ENCODE measurements at regions of chr2 and their contacts with region 1.

Region 1: GRCh38 chr2:217785544-217786045 is 217.2 kb downstream of the TNS1 start:
- DNase-seq: peak; percentile 81
- ATAC-seq: peak; percentile 65
- H3K4me3 Mint-ChIP-seq: no peak overlapping the region
- H3K27ac Mint-ChIP-seq: no peak overlapping the region
- H3K4me1 Mint-ChIP-seq: peaks cover 14% of the 10 kb centered on the region
- H3K27me3 Mint-ChIP-seq: no peaks in the 10 kb centered on the region

Region 2: GRCh38 chr2:217610401-217611075 is 175.1 kb before region 1 on chr2:
- CTCF ChIA-PET with region 1: no interaction called
- DNase-seq: peak; percentile 51
- ATAC-seq: peak; percentile 68
- H3K4me3 Mint-ChIP-seq: no peak overlapping the region
- H3K27ac Mint-ChIP-seq: peak overlapping the region; percentile 29
- H3K4me1 Mint-ChIP-seq: peaks cover 25% of the 10 kb centered on the region
- H3K27me3 Mint-ChIP-seq: no peaks in the 10 kb centered on the region

Region 3: DNA sequence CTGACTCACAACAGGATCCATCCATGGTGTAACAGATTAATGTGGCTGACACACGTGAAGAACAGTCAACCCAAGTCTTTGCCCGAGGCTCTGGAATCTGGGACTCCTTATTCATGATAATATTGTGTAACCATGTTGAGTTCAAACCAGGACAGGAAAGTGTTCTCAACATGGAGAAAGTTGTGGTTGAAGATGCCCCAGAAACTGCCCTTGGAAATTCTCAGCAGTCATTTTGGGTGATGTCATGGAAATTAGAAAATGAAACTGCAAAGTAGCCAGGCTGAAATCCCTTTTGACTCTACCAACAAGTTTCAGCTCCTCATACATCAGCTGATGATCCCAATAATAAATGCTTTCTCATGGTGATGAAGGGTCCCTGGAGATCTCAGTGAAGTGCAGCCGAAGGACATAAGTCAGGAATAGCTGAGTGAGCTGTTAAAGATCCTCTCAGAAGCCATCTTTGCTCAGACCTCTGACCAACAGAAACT is 90.5 kb before region 1 on chr2:
- CTCF ChIA-PET with region 1: no interaction called
- DNase-seq: no peak
- ATAC-seq: no peak
- H3K4me3 Mint-ChIP-seq: no peak overlapping the region
- H3K27ac Mint-ChIP-seq: no peak overlapping the region
- H3K4me1 Mint-ChIP-seq: no peaks in the 10 kb centered on the region
- H3K27me3 Mint-ChIP-seq: no peaks in the 10 kb centered on the region

Region 4: DNA sequence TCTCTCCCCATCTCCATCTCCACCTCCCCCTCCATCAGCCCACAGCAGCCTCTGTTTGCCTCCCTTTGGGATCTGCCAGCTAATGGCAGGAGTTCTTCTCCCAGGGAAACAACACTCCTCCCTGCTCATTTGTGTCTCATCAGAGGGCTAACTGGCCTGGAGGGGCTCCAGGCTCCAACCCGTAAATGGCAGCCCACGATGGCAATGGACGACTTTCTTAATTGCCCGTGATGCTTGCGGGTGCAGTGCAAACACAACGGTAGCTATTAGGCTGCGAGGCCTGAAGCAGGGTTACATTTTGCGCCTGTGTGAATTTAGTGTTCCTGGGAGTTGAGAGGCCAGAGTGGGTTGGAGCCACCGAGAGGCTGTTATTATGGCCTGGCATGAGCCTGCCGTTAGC is 67.9 kb before region 1 on chr2:
- CTCF ChIA-PET with region 1: no interaction called
- DNase-seq: no peak
- ATAC-seq: no peak
- H3K4me3 Mint-ChIP-seq: no peak overlapping the region
- H3K27ac Mint-ChIP-seq: no peak overlapping the region
- H3K4me1 Mint-ChIP-seq: no peaks in the 10 kb centered on the region
- H3K27me3 Mint-ChIP-seq: no peaks in the 10 kb centered on the region

Region 5: DNA sequence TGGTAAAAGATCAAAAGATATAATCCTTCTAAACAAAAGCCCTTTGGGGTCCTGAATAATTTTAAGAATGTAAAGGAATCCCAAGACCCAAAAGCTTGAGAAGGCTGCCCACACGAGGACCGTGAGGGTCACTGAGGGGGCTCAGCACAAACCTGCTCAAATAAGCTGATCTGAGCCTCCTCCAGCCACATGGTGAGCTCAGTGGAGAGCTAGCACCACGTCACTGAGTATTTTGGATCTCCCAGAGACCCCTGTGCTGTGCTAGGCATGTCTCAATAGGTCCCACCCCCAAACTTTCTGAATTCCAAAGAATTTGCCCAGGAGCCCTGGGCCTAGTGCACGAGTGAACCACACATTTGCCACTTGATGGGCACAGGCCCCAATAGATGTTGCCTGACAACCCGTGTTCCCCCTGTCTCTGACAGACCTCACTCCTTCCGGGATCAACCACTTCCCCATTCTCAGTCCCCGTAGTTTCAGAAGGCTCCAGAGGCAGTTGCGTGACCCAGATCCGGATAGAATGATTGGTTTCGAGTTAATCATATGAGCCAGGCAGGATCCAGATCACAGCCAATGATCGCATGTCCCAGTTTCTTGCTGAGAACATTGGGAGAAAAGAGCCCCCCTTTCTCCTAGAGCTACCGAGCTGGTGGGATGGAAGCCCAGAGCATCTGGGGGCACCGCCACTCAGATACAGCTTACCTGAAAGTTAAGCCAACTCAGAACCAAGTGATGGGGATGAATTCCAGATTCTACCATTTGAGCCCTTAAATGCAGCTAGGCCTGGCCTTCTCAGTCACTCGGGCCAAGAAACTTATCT is 13.4 kb after region 1 on chr2:
- CTCF ChIA-PET with region 1: interaction called, 30 read pairs
- DNase-seq: peak; percentile 39
- ATAC-seq: no peak
- H3K4me3 Mint-ChIP-seq: no peak overlapping the region
- H3K27ac Mint-ChIP-seq: no peak overlapping the region
- H3K4me1 Mint-ChIP-seq: peaks cover 5% of the 10 kb centered on the region
- H3K27me3 Mint-ChIP-seq: no peaks in the 10 kb centered on the region

Region 6: GRCh38 chr2:217886720-217887309 is 101.2 kb after region 1 on chr2:
- CTCF ChIA-PET with region 1: interaction called, 85 read pairs
- DNase-seq: peak; percentile 76
- ATAC-seq: peak; percentile 79
- H3K4me3 Mint-ChIP-seq: no peak overlapping the region
- H3K27ac Mint-ChIP-seq: no peak overlapping the region
- H3K4me1 Mint-ChIP-seq: peaks cover 2% of the 10 kb centered on the region
- H3K27me3 Mint-ChIP-seq: no peaks in the 10 kb centered on the region

Region 7: DNA sequence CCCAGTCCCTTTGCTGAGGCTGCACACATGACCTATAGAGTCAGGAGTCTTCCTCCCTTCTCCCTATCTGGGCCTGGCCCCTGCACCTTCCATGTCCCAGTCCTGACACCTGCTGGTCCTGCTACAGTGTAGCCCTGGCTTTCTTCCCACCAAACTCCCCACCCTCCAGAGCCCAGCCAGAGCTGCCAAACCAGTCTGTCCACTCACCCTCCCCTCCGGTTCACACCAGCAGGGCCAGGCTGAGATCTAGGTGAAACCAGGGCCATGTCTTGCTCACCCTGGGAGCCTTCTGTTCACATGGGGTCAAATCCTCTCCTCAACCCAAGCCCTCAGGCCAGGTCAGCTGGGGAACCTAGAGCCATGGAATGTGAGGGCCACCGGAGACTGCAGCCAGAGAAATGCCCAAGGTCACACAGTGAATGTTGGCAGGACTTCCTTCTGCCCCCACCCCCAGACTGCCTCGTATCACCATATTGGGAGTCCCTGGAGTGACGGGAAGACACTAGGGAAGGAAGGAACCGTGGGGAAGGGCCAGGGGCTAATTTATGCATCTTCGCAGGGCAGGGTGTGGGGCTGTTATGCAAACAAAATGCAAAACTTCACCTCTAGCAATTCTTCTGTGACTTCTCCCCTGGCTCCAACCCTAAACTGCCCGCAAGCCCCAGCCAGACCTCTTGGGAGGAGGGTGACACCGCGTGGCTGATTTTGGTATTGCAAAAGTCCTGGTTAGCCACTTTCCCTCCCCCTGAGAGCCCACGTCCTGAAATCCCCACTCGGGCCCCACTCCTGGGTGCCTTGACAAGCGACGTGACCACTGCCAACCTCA is 202.6 kb after region 1 on chr2:
- CTCF ChIA-PET with region 1: interaction called, 156 read pairs
- DNase-seq: peak; percentile 81
- ATAC-seq: peak; percentile 66
- H3K4me3 Mint-ChIP-seq: no peak overlapping the region
- H3K27ac Mint-ChIP-seq: no peak overlapping the region
- H3K4me1 Mint-ChIP-seq: peaks cover 8% of the 10 kb centered on the region
- H3K27me3 Mint-ChIP-seq: peaks cover 2% of the 10 kb centered on the region

Region 8: DNA sequence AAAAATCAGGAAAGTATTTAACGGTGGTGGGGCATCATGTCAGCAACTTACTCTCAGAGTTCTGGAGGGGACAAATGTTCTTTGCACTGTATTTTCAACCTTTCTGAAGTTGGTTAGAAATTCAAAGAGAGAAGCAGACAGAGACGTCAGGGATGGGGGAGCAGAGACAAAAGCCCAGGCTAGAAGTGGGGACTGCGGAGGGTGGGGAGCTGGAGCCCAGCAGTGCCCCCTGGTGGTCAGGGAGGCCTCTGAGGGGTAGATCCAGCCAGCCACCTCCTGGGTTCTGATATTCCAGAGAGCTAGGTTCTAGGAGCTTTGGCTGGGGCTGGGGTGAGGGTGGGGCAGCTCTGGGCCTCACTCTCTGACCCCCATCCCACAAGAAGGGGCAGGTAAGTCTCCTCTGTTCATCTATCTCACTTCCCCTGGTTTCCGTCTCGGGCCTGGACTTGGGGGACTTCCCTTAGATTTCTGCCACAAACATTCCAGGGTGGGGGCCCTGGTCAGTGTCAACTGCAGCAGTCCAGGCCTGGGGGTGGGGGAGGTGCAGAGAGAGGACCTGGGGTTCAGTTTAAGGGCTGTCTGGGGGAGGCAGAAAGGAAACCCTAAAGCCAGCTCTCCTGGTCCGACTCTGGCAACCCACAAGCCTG is 208.3 kb after region 1 on chr2:
- CTCF ChIA-PET with region 1: interaction called, 156 read pairs
- DNase-seq: peak; percentile 66
- ATAC-seq: peak; percentile 74
- H3K4me3 Mint-ChIP-seq: no peak overlapping the region
- H3K27ac Mint-ChIP-seq: no peak overlapping the region
- H3K4me1 Mint-ChIP-seq: peaks cover 4% of the 10 kb centered on the region
- H3K27me3 Mint-ChIP-seq: peaks cover 2% of the 10 kb centered on the region

Region 9: GRCh38 chr2:218033590-218034496 is 248.2 kb after region 1 on chr2:
- CTCF ChIA-PET with region 1: interaction called, 22 read pairs
- DNase-seq: peak; percentile 40
- ATAC-seq: peak; percentile 3
- H3K4me3 Mint-ChIP-seq: peak overlapping the region; percentile 18
- H3K27ac Mint-ChIP-seq: no peak overlapping the region
- H3K4me1 Mint-ChIP-seq: peaks cover 19% of the 10 kb centered on the region
- H3K27me3 Mint-ChIP-seq: no peaks in the 10 kb centered on the region

Region 10: DNA sequence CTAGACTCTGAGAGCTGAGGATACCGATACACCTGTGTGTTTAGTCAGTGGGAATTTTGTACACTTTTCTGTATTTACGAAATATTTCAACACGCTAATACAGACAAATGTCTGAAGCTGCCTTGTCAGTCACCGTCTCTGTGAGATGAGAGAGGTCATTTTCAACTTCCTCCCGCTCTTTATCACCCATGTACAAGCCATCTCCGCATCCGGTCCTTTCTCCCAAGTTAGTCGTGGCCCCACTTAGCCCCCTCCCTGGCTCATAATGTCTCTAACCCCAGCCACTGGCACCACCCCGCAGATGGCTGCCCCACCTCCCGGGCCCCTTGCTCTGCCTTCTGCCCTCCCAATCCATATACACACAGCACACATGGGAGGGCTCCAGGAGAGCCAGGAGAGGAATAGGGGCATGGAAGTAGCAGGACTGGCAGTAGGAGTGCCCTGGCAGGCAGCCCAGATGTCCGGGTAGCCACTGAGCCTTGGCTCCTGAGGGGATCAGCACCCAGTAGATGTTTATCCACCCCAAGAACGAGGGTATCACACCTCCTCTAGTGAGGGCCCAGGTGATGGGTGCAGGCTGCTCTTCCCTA is 281.4 kb after region 1 on chr2:
- CTCF ChIA-PET with region 1: interaction called, 16 read pairs
- DNase-seq: no peak
- ATAC-seq: no peak
- H3K4me3 Mint-ChIP-seq: no peak overlapping the region
- H3K27ac Mint-ChIP-seq: no peak overlapping the region
- H3K4me1 Mint-ChIP-seq: peaks cover 14% of the 10 kb centered on the region
- H3K27me3 Mint-ChIP-seq: peaks cover 13% of the 10 kb centered on the region

Measured in activated CD8-positive, alpha-beta memory T cell treated with anti-CD3 and anti-CD28 coated beads, Interleukin-2, amount 10 ng/mL, durations not matched to agents 7 days and 5 days (primary cell).